ENCODE measurements at regions of chr2 and their contacts with region 1.

Region 1: DNA sequence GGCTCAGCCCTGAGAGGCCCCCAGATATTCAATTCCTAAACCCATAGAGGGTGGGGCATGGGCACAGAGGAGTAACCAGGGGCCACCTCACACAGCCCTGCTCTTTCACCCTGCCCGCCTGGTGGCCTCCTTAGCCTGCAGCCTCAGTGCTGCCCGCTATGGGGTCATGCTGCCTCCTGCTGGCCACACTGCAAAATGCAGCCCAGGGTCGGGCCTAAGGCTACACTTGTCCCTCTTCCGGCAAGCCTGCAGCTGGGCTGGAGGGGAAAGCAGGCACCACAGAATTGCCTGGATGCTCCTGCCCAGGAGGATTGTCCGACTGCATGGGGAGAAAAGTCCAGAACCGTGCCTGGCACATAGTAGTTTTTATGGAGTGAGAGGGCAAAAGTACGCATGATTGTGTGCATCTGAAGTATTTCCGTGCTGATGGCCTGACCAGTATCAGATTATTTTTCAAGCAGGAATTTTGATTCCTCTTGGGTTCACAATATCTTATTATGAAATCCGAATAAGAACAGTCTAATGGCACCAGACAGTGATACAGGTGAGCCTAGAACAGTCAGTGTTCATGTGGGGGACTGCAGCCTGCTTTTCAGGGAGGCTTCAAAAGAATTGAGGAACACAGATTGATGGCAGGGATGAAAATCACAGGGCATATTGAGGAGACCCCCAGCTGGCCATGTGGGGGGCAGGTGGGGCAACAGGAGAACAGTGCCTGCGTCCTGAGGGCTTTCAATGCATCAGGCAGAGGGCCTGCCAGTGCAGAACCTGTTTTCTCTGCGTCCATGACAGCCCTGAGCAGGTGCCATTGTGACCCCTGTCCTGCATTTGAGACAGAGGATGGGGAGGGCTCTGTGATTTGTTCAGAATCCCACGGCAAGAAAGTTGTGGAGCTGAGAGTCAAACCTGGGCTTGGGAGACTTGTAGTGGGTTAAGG is 51.2 kb upstream of the ALPP start:
- DNase-seq: peak; percentile 59
- ATAC-seq: peak; percentile 85
- H3K4me3 ChIP-seq: no peak overlapping the region
- H3K27ac ChIP-seq: no peak overlapping the region
- H3K4me1 ChIP-seq: peaks cover 9% of the 10 kb centered on the region
- H3K27me3 ChIP-seq: no peaks in the 10 kb centered on the region
- CTCF ChIP-seq: peak; percentile 93
- EP300 ChIP-seq: no peak
- POLR2A ChIP-seq: no peak
- RAD21 ChIP-seq: peak; percentile 97

Region 2: GRCh38 chr2:231900486-231900942 is 426.9 kb before region 1 on chr2:
- CTCF ChIA-PET with region 1: interaction called, 13 read pairs
- POLR2A ChIA-PET with region 1: no interaction called
- in situ Hi-C with region 1: loop called (anchors 5 kb)
- intact Hi-C with region 1: no loop called
- DNase-seq: peak; percentile 80
- ATAC-seq: peak; percentile 97
- H3K4me3 ChIP-seq: peak overlapping the region; percentile 11 to 58 (median 15); a peak in 4 of 6 replicates
- H3K27ac ChIP-seq: no peak overlapping the region
- H3K4me1 ChIP-seq: peaks cover 17% of the 10 kb centered on the region
- H3K27me3 ChIP-seq: peaks cover 0 to 25% of the 10 kb centered on the region in 2 experiments; a peak in 4 of 5 replicates
- CTCF ChIP-seq: peak; percentile 99
- EP300 ChIP-seq: no peak
- POLR2A ChIP-seq: no peak
- RAD21 ChIP-seq: peak; percentile 89

Region 3: DNA sequence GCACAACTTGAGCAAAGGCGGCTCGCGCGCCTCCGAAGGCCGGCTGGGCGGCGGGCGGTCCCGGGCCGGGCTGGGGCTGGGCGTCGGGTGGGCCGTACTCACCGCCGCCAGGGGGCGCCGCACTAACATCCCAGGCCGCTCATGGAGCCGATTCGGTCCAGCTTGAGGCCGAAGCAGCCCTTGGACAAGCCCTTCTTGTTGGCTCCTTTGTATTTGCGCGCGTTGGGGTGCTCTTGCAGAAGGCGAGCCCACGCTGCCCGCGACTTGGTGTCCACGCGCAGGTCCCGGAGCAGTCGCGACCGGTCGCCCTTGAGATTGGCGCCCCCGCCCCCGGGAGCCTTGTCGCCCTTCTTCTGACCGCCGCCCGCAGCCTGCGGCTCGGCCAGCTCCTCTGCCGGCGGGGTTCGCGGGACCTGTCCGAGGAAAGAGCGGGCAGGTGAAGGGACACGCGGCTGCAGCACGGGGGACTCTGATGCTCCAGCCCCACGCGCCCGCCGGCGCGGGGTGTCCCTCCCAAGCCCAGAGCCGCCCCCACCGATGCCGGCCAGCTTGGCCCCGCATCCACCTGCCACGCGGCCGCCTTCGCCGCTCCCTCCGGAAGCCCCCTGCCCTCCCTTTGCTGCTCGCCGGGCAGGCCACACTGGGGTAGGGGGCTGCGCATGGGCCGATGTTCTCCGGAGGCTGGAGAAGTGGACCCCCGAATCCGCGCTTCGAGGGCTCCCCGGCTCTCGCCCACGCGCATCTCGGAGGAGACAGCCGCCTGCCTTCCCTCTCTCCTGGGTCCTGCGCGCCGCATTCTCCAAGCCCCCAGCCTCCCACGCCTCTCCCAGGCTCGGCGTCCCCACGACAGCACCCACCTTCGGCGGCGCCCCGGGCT is 401.8 kb before region 1 on chr2:
- CTCF ChIA-PET with region 1: interaction called, 6 read pairs
- POLR2A ChIA-PET with region 1: no interaction called
- in situ Hi-C with region 1: no loop called
- intact Hi-C with region 1: loop called (anchors 1 kb)
- DNase-seq: peak; percentile 73
- ATAC-seq: peak; percentile 88
- H3K4me3 ChIP-seq: peak overlapping the region; percentile 41 to 75 (median 58)
- H3K27ac ChIP-seq: no peak overlapping the region
- H3K4me1 ChIP-seq: peaks cover 44% of the 10 kb centered on the region
- H3K27me3 ChIP-seq: peaks cover 18 to 92% of the 10 kb centered on the region in 2 experiments; a peak in 4 of 5 replicates
- CTCF ChIP-seq: peak; percentile 91
- EP300 ChIP-seq: no peak
- POLR2A ChIP-seq: no peak
- RAD21 ChIP-seq: peak; percentile 92

Region 4: GRCh38 chr2:232053777-232054176 is 273.6 kb before region 1 on chr2:
- CTCF ChIA-PET with region 1: no interaction called
- POLR2A ChIA-PET with region 1: no interaction called
- in situ Hi-C with region 1: no loop called
- intact Hi-C with region 1: no loop called
- DNase-seq: no peak
- ATAC-seq: no peak
- H3K4me3 ChIP-seq: no peak overlapping the region
- H3K27ac ChIP-seq: no peak overlapping the region
- H3K4me1 ChIP-seq: no peaks in the 10 kb centered on the region
- H3K27me3 ChIP-seq: no peaks in the 10 kb centered on the region
- CTCF ChIP-seq: no peak
- EP300 ChIP-seq: no peak
- POLR2A ChIP-seq: no peak
- RAD21 ChIP-seq: no peak

Region 5: DNA sequence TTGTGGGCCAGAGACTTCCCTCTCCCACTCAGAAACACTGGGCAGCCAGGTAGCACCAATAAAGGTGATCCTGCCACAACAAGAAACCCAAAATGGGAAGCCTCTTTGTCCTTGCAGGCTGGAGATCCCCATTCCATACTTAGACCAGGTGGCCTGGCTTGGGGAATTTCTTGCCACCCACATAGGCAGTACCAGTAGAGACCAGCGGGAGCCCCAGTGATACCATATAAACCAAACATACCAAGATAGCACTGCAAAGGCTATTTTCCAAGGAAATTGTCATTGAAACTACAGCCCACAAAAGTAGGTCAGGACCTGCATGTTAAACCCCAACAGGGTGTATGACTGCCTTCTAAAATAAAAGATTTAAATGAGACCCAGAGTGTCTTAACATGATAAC is 194.3 kb before region 1 on chr2:
- CTCF ChIA-PET with region 1: no interaction called
- POLR2A ChIA-PET with region 1: no interaction called
- in situ Hi-C with region 1: loop called (anchors 10 kb)
- intact Hi-C with region 1: no loop called
- DNase-seq: peak; percentile 13
- ATAC-seq: peak; percentile 92
- H3K4me3 ChIP-seq: no peak overlapping the region
- H3K27ac ChIP-seq: no peak overlapping the region
- H3K4me1 ChIP-seq: no peaks in the 10 kb centered on the region
- H3K27me3 ChIP-seq: no peaks in the 10 kb centered on the region
- CTCF ChIP-seq: no peak; the same call in 1 of the 2 replicates
- EP300 ChIP-seq: no peak
- POLR2A ChIP-seq: no peak
- RAD21 ChIP-seq: 0 out of 2 replicates have a peak, but pooled peaks have one; percentile 20

Region 6: DNA sequence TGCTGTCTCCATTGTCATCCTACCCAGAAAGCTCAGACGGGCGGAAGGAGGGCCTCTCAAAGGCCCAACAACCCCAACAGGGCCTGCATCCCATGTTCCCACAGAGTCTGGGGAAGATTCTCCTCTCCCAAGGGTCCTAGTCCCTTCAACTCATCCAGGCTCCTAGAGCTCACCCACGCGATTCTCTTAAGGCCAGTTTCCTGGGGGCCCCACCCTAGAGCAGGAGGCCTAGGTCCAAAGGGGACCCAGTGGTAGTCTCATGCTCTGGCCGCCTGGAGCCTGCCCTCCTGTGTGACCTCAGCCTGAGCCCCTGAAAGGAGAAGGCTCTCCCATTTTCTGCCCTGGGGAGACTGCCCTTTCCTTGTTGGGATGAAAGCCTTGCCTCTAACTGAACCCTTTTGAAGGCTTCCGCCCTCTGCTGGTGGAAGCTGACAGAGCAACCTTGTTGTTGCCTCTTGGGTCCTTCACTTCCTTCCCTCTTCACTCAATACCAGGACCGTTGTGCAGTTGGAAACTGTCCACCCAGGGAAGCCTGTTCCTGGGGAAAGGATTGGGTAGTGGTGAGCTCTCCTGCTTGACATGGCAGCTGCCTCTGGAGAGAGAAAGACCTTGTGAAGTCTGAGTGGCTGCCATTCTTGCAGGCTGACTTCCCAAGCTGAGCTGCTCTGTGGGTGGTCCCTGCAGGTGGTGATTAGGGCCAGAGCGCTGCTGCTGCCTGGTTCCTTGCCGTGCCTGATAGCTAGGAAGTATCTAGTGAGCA is 34.8 kb before region 1 on chr2:
- CTCF ChIA-PET with region 1: interaction called, 14 read pairs
- POLR2A ChIA-PET with region 1: no interaction called
- in situ Hi-C with region 1: no loop called
- intact Hi-C with region 1: no loop called
- DNase-seq: peak; percentile 58
- ATAC-seq: peak; percentile 90
- H3K4me3 ChIP-seq: no peak overlapping the region
- H3K27ac ChIP-seq: no peak overlapping the region
- H3K4me1 ChIP-seq: peaks cover 4% of the 10 kb centered on the region; the same call in 1 of the 2 replicates
- H3K27me3 ChIP-seq: no peaks in the 10 kb centered on the region
- CTCF ChIP-seq: peak; percentile 76
- EP300 ChIP-seq: no peak
- POLR2A ChIP-seq: no peak
- RAD21 ChIP-seq: peak; percentile 41

Region 7: GRCh38 chr2:232348936-232349335 is 21.6 kb after region 1 on chr2:
- CTCF ChIA-PET with region 1: no interaction called
- POLR2A ChIA-PET with region 1: no interaction called
- in situ Hi-C with region 1: no loop called
- intact Hi-C with region 1: no loop called
- DNase-seq: no peak
- ATAC-seq: no peak
- H3K4me3 ChIP-seq: no peak overlapping the region
- H3K27ac ChIP-seq: no peak overlapping the region
- H3K4me1 ChIP-seq: peaks cover 10% of the 10 kb centered on the region
- H3K27me3 ChIP-seq: peaks cover 18 to 63% of the 10 kb centered on the region in 2 experiments
- CTCF ChIP-seq: no peak
- EP300 ChIP-seq: no peak
- POLR2A ChIP-seq: no peak
- RAD21 ChIP-seq: no peak

Region 8: GRCh38 chr2:232668805-232669444 is 341.6 kb after region 1 on chr2:
- CTCF ChIA-PET with region 1: no interaction called
- POLR2A ChIA-PET with region 1: no interaction called
- in situ Hi-C with region 1: no loop called
- intact Hi-C with region 1: no loop called
- DNase-seq: peak; percentile 38
- ATAC-seq: peak; percentile 85
- H3K4me3 ChIP-seq: 0 out of 6 replicates have a peak overlapping the region, but pooled peaks of 1 of the 3 experiments have one; percentile 8
- H3K27ac ChIP-seq: no peak overlapping the region
- H3K4me1 ChIP-seq: no peaks in the 10 kb centered on the region
- H3K27me3 ChIP-seq: no peaks in the 10 kb centered on the region
- CTCF ChIP-seq: peak; percentile 88
- EP300 ChIP-seq: no peak
- POLR2A ChIP-seq: no peak
- RAD21 ChIP-seq: peak; percentile 67